BJ (cell line): ENCODE measurements at regions of chr9 and their contacts with region 1.

Region 1: DNA sequence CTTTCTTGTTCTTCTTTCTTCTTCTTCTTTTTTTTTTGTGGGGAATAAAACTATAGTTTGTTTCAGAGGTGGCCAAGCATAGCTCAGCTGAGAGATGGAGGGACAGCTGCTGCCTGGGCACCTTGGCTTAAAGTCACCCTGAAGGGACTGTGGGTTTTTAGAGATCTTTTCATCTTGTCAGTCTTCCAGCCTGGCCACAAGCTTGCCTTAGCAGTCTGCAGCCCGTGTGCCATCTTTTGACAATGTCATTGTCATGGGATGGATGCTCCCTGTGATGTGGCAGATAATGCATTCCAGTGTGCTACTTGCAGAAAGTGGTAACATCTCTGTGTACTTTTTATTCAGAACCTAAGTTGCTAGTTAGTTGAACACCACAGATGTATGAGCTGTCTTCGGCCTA is 280.8 kb downstream of the FANCC start:
- DNase-seq: no peak
- H3K4me3 ChIP-seq: no peak overlapping the region
- H3K27me3 ChIP-seq: no peaks in the 10 kb centered on the region
- CTCF ChIP-seq: no peak

Region 2: DNA sequence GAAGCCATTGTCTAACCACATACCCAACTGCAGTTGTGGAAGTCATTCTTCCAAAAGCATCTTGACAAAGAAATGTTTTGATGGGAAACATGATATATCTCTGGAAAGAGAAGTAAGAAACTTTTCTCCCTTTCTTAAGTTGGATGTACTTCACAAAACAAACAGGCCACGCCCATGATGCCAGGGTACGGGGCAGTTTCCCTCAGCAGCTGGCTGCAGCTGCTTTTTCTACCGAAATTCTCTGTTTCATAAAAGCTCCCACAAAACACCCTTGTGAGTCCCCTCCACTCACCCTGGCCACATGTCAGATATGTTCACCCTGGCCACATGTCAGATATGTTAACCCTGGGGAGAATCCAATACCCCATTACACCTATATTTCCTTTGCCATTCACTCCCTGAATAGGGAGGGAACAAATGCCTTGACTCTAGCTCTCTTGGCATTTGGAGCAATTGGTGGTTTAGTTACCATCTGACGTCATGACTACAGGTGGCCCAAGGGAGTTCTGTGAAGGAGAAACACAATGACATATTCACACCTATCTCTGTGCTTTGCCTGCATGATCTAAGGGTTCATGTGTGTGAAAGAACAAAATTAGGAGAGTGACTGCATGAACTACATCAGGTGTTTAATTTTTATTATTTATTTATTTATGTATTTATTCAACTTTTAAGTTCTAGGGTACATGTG is 207.2 kb before region 1 on chr9:
- CTCF ChIA-PET with region 1: no interaction called
- POLR2A ChIA-PET with region 1: interaction called, 21 read pairs
- DNase-seq: no peak
- H3K4me3 ChIP-seq: no peak overlapping the region
- H3K27me3 ChIP-seq: no peaks in the 10 kb centered on the region
- CTCF ChIP-seq: no peak